T-cell (primary cell): ENCODE measurements at regions of chr2 and their contacts with region 1.

Region 1: GRCh38 chr2:54665436-54665856 is 58.0 kb upstream of the EML6 start:
- DNase-seq: peak in 26 of 35 experiments; percentile 10 to 67 (median 32)
- ATAC-seq: peak in 3 of 4 experiments; percentile 23 to 63 (median 36)
- H3K4me3 ChIP-seq: no peak overlapping the region
- H3K4me3 Mint-ChIP-seq: no peak overlapping the region
- H3K27ac ChIP-seq: no peak overlapping the region
- H3K27ac Mint-ChIP-seq: peak overlapping the region; percentile 77 to 82
- H3K4me1 ChIP-seq: no peaks in the 10 kb centered on the region
- H3K4me1 Mint-ChIP-seq: peaks cover 6 to 12% (median 11%) of the 10 kb centered on the region in 3 donors
- H3K27me3 ChIP-seq: no peaks in the 10 kb centered on the region
- H3K27me3 Mint-ChIP-seq: no peaks in the 10 kb centered on the region

Region 2: GRCh38 chr2:54370405-54371104 is 294.9 kb before region 1 on chr2:
- CTCF ChIA-PET with region 1: no interaction called
- POLR2A ChIA-PET with region 1: no interaction called
- DNase-seq: no peak
- ATAC-seq: no peak
- H3K4me3 ChIP-seq: no peak overlapping the region
- H3K4me3 Mint-ChIP-seq: no peak overlapping the region
- H3K27ac ChIP-seq: no peak overlapping the region
- H3K27ac Mint-ChIP-seq: no peak overlapping the region
- H3K4me1 ChIP-seq: no peaks in the 10 kb centered on the region
- H3K4me1 Mint-ChIP-seq: no peaks in the 10 kb centered on the region
- H3K27me3 ChIP-seq: peaks cover 0 to 4% of the 10 kb centered on the region in 2 experiments
- H3K27me3 Mint-ChIP-seq: peaks cover 19 to 25% of the 10 kb centered on the region in 2 donors

Region 3: GRCh38 chr2:54704688-54705605 is 39.5 kb after region 1 on chr2:
- CTCF ChIA-PET with region 1: interaction called, 5 to 19 read pairs
- POLR2A ChIA-PET with region 1: no interaction called
- DNase-seq: peak in 1 of 35 experiments; percentile 77
- ATAC-seq: peak; percentile 35 to 61 (median 59)
- H3K4me3 ChIP-seq: no peak overlapping the region
- H3K4me3 Mint-ChIP-seq: no peak overlapping the region
- H3K27ac ChIP-seq: no peak overlapping the region
- H3K27ac Mint-ChIP-seq: no peak overlapping the region
- H3K4me1 ChIP-seq: peaks cover 0 to 15% of the 10 kb centered on the region in 2 experiments
- H3K4me1 Mint-ChIP-seq: peaks cover 0 to 8% (median 2%) of the 10 kb centered on the region in 3 donors
- H3K27me3 ChIP-seq: peaks cover 0 to 17% of the 10 kb centered on the region in 2 experiments
- H3K27me3 Mint-ChIP-seq: peaks cover 13 to 15% of the 10 kb centered on the region in 2 donors

Region 4: GRCh38 chr2:54750040-54750439 is 84.6 kb after region 1 on chr2:
- CTCF ChIA-PET with region 1: no interaction called
- POLR2A ChIA-PET with region 1: no interaction called
- DNase-seq: no peak
- ATAC-seq: no peak
- H3K4me3 ChIP-seq: no peak overlapping the region
- H3K4me3 Mint-ChIP-seq: no peak overlapping the region
- H3K27ac ChIP-seq: no peak overlapping the region
- H3K27ac Mint-ChIP-seq: no peak overlapping the region
- H3K4me1 ChIP-seq: no peaks in the 10 kb centered on the region
- H3K4me1 Mint-ChIP-seq: no peaks in the 10 kb centered on the region
- H3K27me3 ChIP-seq: no peaks in the 10 kb centered on the region
- H3K27me3 Mint-ChIP-seq: no peaks in the 10 kb centered on the region

Region 5: GRCh38 chr2:54838585-54839035 is 173.2 kb after region 1 on chr2:
- CTCF ChIA-PET with region 1: interaction called, 6 to 14 read pairs
- POLR2A ChIA-PET with region 1: no interaction called
- DNase-seq: peak in 34 of 35 experiments; percentile 4 to 81 (median 46)
- ATAC-seq: peak; percentile 71 to 84 (median 76)
- H3K4me3 ChIP-seq: no peak overlapping the region
- H3K4me3 Mint-ChIP-seq: no peak overlapping the region
- H3K27ac ChIP-seq: no peak overlapping the region
- H3K27ac Mint-ChIP-seq: no peak overlapping the region
- H3K4me1 ChIP-seq: no peaks in the 10 kb centered on the region
- H3K4me1 Mint-ChIP-seq: no peaks in the 10 kb centered on the region
- H3K27me3 ChIP-seq: no peaks in the 10 kb centered on the region
- H3K27me3 Mint-ChIP-seq: no peaks in the 10 kb centered on the region

Region 6: GRCh38 chr2:55168221-55169154 is 503.0 kb after region 1 on chr2:
- CTCF ChIA-PET with region 1: interaction called, 13 read pairs
- POLR2A ChIA-PET with region 1: interaction called in 1 of 2 experiments, 11 read pairs
- DNase-seq: peak in 29 of 35 experiments; percentile 4 to 70 (median 20)
- ATAC-seq: peak; percentile 59 to 73 (median 66)
- H3K4me3 ChIP-seq: no peak overlapping the region
- H3K4me3 Mint-ChIP-seq: no peak overlapping the region
- H3K27ac ChIP-seq: no peak overlapping the region
- H3K27ac Mint-ChIP-seq: no peak overlapping the region
- H3K4me1 ChIP-seq: no peaks in the 10 kb centered on the region
- H3K4me1 Mint-ChIP-seq: peaks cover 0 to 4% (median 0%) of the 10 kb centered on the region in 3 donors
- H3K27me3 ChIP-seq: no peaks in the 10 kb centered on the region
- H3K27me3 Mint-ChIP-seq: no peaks in the 10 kb centered on the region

Region 7: DNA sequence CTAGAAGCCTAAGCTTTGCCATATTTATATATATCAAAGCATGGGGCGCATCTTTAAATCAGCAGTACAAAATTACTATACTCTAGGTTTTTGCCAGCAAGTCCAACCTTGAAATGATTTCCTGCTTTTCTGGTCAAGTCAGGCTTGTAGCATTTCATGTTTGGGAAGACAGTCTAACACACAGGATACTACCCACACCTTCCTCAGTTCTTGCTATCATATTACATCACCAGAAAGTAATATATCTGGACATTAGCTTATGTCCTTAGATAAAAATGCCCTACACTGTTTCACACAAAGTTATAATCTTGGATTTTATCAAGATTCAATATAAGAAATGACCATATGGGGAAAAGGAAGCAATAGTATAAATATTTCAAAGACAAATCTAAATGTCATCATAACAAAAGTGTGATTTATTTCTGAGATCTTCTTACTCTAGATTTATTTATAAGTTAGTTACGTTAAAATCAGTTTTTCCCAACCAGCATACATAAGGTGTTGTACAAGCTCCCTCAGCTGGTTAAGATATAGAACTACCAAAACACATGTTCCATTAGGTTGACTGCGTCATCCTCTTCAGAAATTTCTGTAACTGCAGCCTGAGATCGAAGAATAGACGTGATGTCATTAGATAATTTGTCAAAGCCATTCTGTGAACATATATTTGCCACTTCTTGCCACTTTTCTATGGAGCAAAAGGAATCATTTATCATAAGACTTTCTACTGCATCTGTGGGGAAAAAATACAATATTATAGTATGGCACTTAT is 510.0 kb after region 1 on chr2:
- CTCF ChIA-PET with region 1: interaction called, 13 read pairs
- POLR2A ChIA-PET with region 1: interaction called in 1 of 2 experiments, 11 read pairs
- DNase-seq: peak in 1 of 35 experiments; percentile 67
- ATAC-seq: peak; percentile 70 to 86 (median 78)
- H3K4me3 ChIP-seq: no peak overlapping the region
- H3K4me3 Mint-ChIP-seq: no peak overlapping the region
- H3K27ac ChIP-seq: no peak overlapping the region
- H3K27ac Mint-ChIP-seq: no peak overlapping the region
- H3K4me1 ChIP-seq: no peaks in the 10 kb centered on the region
- H3K4me1 Mint-ChIP-seq: peaks cover 6 to 8% (median 6%) of the 10 kb centered on the region in 3 donors
- H3K27me3 ChIP-seq: no peaks in the 10 kb centered on the region
- H3K27me3 Mint-ChIP-seq: no peaks in the 10 kb centered on the region